Activated naive CD4-positive, alpha-beta T cell treated with anti-CD3 and anti-CD28 coated beads, Interleukin-2, amount 10 ng/mL, durations not matched to agents 7 days and 5 days (primary cell): ENCODE measurements at regions of chr3 and their contacts with region 1.

Region 1: GRCh38 chr3:128680602-128681368 is 30.2 kb upstream of the RPN1 start:
- DNase-seq: peak; percentile 98
- H3K4me3 Mint-ChIP-seq: peak overlapping the region; percentile 94
- H3K27ac Mint-ChIP-seq: peak overlapping the region; percentile 97
- H3K4me1 Mint-ChIP-seq: peaks cover 49% of the 10 kb centered on the region
- H3K27me3 Mint-ChIP-seq: peaks cover 9% of the 10 kb centered on the region

Region 2: GRCh38 chr3:128617557-128618397 is 63.0 kb before region 1 on chr3:
- CTCF ChIA-PET with region 1: interaction called, 11 read pairs
- DNase-seq: peak; percentile 99
- H3K4me3 Mint-ChIP-seq: peak overlapping the region; percentile 94
- H3K27ac Mint-ChIP-seq: peak overlapping the region; percentile 90
- H3K4me1 Mint-ChIP-seq: peaks cover 42% of the 10 kb centered on the region
- H3K27me3 Mint-ChIP-seq: no peaks in the 10 kb centered on the region

Region 3: DNA sequence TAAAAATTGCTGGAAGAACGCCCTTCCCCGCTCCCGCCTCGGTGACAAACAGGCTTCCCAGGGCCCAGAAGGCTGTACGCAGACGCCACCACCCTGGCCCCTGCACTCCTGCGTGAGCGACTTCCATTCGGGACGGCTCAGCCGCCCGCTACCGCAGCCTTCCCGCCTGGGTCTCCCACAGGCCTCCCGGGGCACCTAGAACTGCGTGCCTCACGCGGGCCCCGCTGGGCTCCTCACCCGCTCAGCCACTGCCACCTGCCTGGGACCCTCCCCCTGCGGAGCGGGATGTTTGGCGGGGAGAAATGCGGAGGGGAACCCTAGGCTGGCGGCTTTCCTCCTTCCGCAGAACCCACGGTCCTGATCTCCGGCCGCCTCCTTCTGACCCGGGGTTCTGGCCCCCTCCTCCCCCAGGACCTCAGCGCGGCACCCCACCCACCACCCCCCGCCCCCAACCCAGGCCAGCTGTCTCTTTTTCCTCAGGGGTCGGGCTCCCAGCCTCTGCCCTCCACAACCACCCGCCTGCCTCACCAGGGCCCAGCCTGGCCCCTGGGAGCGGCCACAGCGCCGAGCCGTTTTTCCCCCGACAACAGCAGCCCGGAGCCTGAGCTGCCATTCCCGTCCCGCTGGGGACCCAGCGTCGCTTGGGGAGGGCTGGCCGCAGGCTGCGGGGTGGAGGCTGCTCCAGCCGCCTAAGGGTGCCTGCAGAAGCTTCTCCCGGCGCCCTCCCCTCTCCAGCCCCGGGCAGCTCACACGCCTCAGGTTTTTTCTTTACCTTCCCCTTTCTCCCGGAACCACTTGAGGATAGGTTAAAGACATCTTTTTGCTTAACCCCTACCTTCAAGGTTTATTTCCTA is 17.7 kb after region 1 on chr3:
- CTCF ChIA-PET with region 1: interaction called, 10 read pairs
- DNase-seq: peak; percentile 31
- H3K4me3 Mint-ChIP-seq: peak overlapping the region; percentile 66
- H3K27ac Mint-ChIP-seq: no peak overlapping the region
- H3K4me1 Mint-ChIP-seq: peaks cover 10% of the 10 kb centered on the region
- H3K27me3 Mint-ChIP-seq: peaks cover 44% of the 10 kb centered on the region

Region 4: GRCh38 chr3:128787256-128788240 is 106.8 kb after region 1 on chr3:
- CTCF ChIA-PET with region 1: interaction called, 26 read pairs
- DNase-seq: peak; percentile 54
- H3K4me3 Mint-ChIP-seq: peak overlapping the region; percentile 67
- H3K27ac Mint-ChIP-seq: peak overlapping the region; percentile 94
- H3K4me1 Mint-ChIP-seq: peaks cover 84% of the 10 kb centered on the region
- H3K27me3 Mint-ChIP-seq: no peaks in the 10 kb centered on the region

Region 5: DNA sequence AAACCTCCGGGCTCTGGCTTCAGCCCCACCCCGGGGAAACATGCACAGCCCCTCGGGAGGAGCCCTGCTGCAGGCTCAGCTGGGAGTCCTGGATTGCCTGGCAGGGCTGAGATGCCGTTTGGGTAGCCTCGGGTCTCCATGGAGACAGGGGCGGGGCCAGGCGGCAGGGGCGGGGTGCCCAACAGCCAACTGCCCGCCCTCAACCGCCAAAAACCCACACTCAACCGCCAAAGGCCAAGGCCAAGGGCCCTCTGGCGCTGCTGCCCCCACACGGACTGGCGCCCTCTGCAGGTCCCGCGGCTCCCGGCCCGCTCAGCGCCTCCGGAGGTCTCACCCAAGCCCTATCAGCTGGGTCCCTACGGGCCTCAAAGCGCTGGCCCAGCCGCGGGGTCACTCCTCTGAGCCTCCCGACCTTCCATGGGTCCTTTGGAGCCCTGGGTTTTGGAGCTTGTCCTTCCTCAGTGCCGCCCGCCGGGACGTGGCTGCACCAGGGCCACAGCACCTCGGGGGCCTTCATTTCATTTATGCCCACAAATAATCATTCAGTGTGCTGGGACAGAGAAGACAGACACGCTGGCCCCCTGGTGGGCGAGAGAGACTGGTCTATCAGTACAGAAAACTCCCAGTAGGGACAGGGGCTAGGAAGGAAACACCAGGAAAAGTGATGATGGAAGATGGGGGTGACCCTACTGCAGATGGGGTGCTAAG is 165.1 kb after region 1 on chr3:
- CTCF ChIA-PET with region 1: interaction called, 35 read pairs
- DNase-seq: peak; percentile 88
- H3K4me3 Mint-ChIP-seq: peak overlapping the region; percentile 62
- H3K27ac Mint-ChIP-seq: peak overlapping the region; percentile 38
- H3K4me1 Mint-ChIP-seq: peaks cover 14% of the 10 kb centered on the region
- H3K27me3 Mint-ChIP-seq: peaks cover 8% of the 10 kb centered on the region

Region 6: DNA sequence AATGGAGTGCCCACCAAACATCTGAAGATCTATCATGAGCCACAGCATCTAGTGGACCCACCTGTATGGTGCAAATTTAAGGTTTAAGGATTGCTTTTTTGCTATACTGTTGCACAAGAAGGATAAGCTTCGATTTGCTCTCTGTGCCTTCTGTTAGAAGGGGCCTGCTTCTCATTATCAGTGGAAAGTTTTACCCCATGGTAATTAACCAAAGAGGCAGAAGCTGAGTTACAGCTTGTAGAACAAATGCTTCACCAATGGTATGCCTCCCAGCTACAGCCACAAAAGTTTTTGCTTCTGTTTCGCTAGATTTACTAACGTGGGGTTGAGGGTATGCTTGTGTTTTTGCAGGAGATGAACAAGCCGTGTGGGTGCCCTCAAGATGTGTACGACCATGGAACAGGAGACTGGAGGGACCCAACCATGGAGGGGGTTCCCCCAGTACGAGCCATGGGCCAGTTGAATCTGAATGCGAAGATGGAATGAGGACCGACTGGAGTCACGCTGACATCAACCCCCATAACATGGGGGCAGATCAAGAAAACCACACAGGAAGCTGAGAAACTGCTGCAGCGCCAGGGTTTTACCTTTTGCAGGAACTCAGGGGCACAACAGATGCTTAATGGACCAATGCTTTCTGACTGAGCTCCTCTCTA is 242.1 kb after region 1 on chr3:
- CTCF ChIA-PET with region 1: interaction called, 12 read pairs
- DNase-seq: peak; percentile 73
- H3K4me3 Mint-ChIP-seq: peak overlapping the region; percentile 60
- H3K27ac Mint-ChIP-seq: peak overlapping the region; percentile 84
- H3K4me1 Mint-ChIP-seq: peaks cover 38% of the 10 kb centered on the region
- H3K27me3 Mint-ChIP-seq: peaks cover 13% of the 10 kb centered on the region